Activated CD4-positive, alpha-beta memory T cell treated with anti-CD3 and anti-CD28 coated beads, Interleukin-2, amount 10 ng/mL, durations not matched to agents 7 days and 5 days (primary cell): ENCODE measurements at regions of chr11 and their contacts with region 1.

Region 1: GRCh38 chr11:128290106-128290840 is 297.1 kb downstream of the ETS1 start:
- DNase-seq: peak; percentile 79
- H3K4me3 Mint-ChIP-seq: peak overlapping the region; percentile 92
- H3K27ac Mint-ChIP-seq: peak overlapping the region; percentile 97
- H3K4me1 Mint-ChIP-seq: peaks cover 87% of the 10 kb centered on the region
- H3K27me3 Mint-ChIP-seq: no peaks in the 10 kb centered on the region

Region 2: DNA sequence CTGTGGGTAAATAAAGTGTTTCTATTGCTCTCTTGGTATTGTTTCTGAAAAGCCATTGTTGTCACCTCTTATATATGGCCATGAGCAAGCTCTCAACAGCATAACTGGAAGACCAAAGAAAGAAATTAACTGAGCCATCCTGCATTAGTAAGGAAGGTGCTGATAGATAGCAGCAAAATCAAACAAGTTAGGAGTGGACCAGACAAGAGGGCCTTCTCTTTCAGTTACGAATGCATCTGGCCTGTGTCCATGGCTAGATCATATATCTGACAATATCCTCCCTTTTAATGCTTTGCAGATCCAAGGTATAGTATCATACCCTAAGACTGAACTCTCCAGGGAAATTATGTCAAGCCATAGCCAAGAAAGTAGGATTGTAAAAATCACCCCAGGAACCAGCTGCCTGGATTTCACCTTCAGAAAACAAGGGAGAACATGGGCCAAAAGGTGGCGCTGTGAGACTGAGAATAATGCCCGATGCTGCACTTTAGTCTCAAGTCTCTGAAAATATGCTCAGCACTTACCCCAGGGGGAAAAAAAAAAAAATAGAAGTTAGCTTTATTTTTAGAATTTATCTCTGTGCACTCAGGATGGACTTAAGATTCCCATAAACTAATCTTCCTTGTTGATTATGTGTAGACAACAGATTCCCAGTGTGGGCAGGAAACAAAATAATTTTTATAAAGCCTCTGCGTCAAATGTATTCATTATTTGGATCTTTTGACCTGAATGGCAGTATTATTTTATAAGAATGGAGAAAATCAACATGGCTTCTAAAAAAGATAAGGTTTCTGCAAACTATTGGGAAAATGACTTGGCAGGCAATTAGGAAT is 118.0 kb before region 1 on chr11:
- CTCF ChIA-PET with region 1: interaction called, 34 read pairs
- POLR2A ChIA-PET with region 1: interaction called, 9 read pairs
- DNase-seq: peak; percentile 87
- H3K4me3 Mint-ChIP-seq: no peak overlapping the region
- H3K27ac Mint-ChIP-seq: no peak overlapping the region
- H3K4me1 Mint-ChIP-seq: peaks cover 13% of the 10 kb centered on the region
- H3K27me3 Mint-ChIP-seq: peaks cover 7% of the 10 kb centered on the region

Region 3: GRCh38 chr11:128463371-128463829 is 173.1 kb after region 1 on chr11:
- CTCF ChIA-PET with region 1: interaction called, 27 read pairs
- POLR2A ChIA-PET with region 1: interaction called, 125 read pairs
- DNase-seq: no peak
- H3K4me3 Mint-ChIP-seq: peak overlapping the region; percentile 9
- H3K27ac Mint-ChIP-seq: peak overlapping the region; percentile 80
- H3K4me1 Mint-ChIP-seq: peaks cover 86% of the 10 kb centered on the region
- H3K27me3 Mint-ChIP-seq: no peaks in the 10 kb centered on the region

Region 4: GRCh38 chr11:128488471-128488870 is 198.2 kb after region 1 on chr11:
- CTCF ChIA-PET with region 1: interaction called, 20 read pairs
- POLR2A ChIA-PET with region 1: interaction called, 62 read pairs
- DNase-seq: no peak
- H3K4me3 Mint-ChIP-seq: peak overlapping the region; percentile 29
- H3K27ac Mint-ChIP-seq: peak overlapping the region; percentile 87
- H3K4me1 Mint-ChIP-seq: peaks cover 95% of the 10 kb centered on the region
- H3K27me3 Mint-ChIP-seq: no peaks in the 10 kb centered on the region

Region 5: DNA sequence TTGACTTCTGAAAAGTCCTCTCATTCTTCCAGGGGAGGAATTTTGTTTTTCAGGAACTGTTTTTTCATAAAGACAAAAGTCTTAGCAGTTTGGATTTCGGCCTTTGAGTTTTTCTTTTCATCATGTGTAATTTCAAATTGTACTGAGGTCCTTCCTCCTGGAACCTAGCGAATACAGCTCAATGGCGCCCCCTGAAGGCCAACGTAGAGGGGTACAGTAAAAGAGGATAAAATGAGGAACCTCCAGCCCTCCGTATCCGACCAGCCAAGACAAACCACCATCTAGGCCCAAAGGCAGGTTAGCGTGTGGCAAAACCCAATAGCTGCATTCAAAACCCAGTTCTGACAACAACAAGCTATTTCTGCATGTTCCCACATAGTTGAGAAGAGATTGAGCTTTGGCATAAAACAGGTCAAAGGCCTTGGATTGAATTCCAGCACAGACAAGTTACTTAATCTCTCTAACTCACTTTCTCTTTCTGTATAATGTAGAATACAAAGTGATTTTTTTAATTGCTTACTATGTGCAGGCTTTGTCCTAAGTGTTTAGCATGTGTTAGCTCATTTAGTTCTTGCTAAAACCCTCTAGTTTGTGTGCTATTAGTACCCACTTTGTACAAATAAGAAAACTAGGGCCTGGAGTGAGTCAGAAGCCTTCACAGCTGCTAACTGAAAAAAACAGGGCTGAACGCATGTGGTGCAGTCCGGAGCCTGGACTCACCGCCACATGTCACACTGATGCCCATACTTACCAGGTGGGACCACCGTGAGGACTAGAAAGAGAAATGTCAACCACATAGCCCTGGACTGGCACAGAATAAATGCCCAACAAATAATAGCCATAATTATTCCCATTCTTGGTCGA is 340.3 kb after region 1 on chr11:
- CTCF ChIA-PET with region 1: interaction called, 157 read pairs
- POLR2A ChIA-PET with region 1: interaction called, 118 read pairs
- DNase-seq: peak; percentile 91
- H3K4me3 Mint-ChIP-seq: peak overlapping the region; percentile 38
- H3K27ac Mint-ChIP-seq: peak overlapping the region; percentile 85
- H3K4me1 Mint-ChIP-seq: peaks cover 63% of the 10 kb centered on the region
- H3K27me3 Mint-ChIP-seq: no peaks in the 10 kb centered on the region